Naive thymus-derived CD4-positive, alpha-beta T cell (primary cell): ENCODE measurements at regions of chrX and their contacts with region 1.

Region 1: GRCh38 chrX:19334945-19335626 is 8.6 kb upstream of the PDHA1 start:
- DNase-seq: peak in 4 of 9 donors; percentile 24 to 32 (median 28)
- ATAC-seq: no peak
- H3K4me3 ChIP-seq: no peak overlapping the region
- H3K4me3 Mint-ChIP-seq: peak overlapping the region in 1 of 10 donors; percentile 32
- H3K27ac ChIP-seq: no peak overlapping the region
- H3K27ac Mint-ChIP-seq: peak overlapping the region in 1 of 9 donors; percentile 77
- H3K4me1 ChIP-seq: no peaks in the 10 kb centered on the region
- H3K4me1 Mint-ChIP-seq: peaks cover 0 to 5% (median 2%) of the 10 kb centered on the region in 7 donors
- H3K27me3 ChIP-seq: no peaks in the 10 kb centered on the region
- H3K27me3 Mint-ChIP-seq: peaks cover 0 to 4% (median 0%) of the 10 kb centered on the region in 5 donors

Region 2: GRCh38 chrX:17697191-17697590 is 1637.9 kb before region 1 on chrX:
- CTCF ChIA-PET with region 1: no interaction called
- POLR2A ChIA-PET with region 1: no interaction called
- intact Hi-C with region 1: loop called in 1 of 2 experiments (anchors 2 kb)
- DNase-seq: peak in 5 of 9 donors; percentile 0 to 28 (median 14)
- ATAC-seq: no peak
- H3K4me3 ChIP-seq: no peak overlapping the region
- H3K4me3 Mint-ChIP-seq: no peak overlapping the region
- H3K27ac ChIP-seq: no peak overlapping the region
- H3K27ac Mint-ChIP-seq: no peak overlapping the region
- H3K4me1 ChIP-seq: no peaks in the 10 kb centered on the region
- H3K4me1 Mint-ChIP-seq: no peaks in the 10 kb centered on the region
- H3K27me3 ChIP-seq: no peaks in the 10 kb centered on the region
- H3K27me3 Mint-ChIP-seq: no peaks in the 10 kb centered on the region

Region 3: DNA sequence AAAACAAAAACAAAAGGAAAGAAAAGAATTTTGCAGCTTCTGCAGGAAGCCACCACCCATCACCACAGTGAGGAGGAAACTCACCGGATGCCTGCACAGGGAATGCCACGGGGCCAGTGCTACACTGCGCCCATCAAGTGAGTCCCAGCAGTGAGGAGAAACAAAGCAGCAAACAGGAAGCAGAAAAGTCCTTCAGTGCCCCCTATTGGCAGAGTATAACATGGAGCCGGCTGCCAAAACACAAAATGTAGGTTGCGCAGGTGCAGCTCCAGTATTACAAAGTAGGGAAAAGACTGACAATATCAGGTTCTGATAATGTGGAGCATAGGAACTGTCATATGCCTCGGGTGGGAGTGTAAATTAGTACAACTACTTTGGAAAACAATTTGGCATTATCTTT is 957.3 kb before region 1 on chrX:
- CTCF ChIA-PET with region 1: no interaction called
- POLR2A ChIA-PET with region 1: no interaction called
- intact Hi-C with region 1: no loop called
- DNase-seq: peak in 6 of 9 donors; percentile 21 to 39 (median 24)
- ATAC-seq: peak; percentile 74
- H3K4me3 ChIP-seq: no peak overlapping the region
- H3K4me3 Mint-ChIP-seq: peak overlapping the region in 3 of 10 donors; percentile 20 to 37 (median 26)
- H3K27ac ChIP-seq: no peak overlapping the region
- H3K27ac Mint-ChIP-seq: peak overlapping the region in 5 of 9 donors; percentile 58 to 83 (median 62)
- H3K4me1 ChIP-seq: no peaks in the 10 kb centered on the region
- H3K4me1 Mint-ChIP-seq: peaks cover 0 to 6% (median 5%) of the 10 kb centered on the region in 7 donors
- H3K27me3 ChIP-seq: no peaks in the 10 kb centered on the region
- H3K27me3 Mint-ChIP-seq: no peaks in the 10 kb centered on the region

Region 4: GRCh38 chrX:18390941-18391538 is 944.0 kb before region 1 on chrX:
- CTCF ChIA-PET with region 1: interaction called, 7 read pairs
- POLR2A ChIA-PET with region 1: no interaction called
- intact Hi-C with region 1: loop called (anchors 1 kb)
- DNase-seq: peak; percentile 12 to 69 (median 60)
- ATAC-seq: peak; percentile 60
- H3K4me3 ChIP-seq: no peak overlapping the region
- H3K4me3 Mint-ChIP-seq: no peak overlapping the region
- H3K27ac ChIP-seq: no peak overlapping the region
- H3K27ac Mint-ChIP-seq: peak overlapping the region in 2 of 9 donors; percentile 2 to 19
- H3K4me1 ChIP-seq: no peaks in the 10 kb centered on the region
- H3K4me1 Mint-ChIP-seq: peaks cover 0 to 6% (median 5%) of the 10 kb centered on the region in 7 donors
- H3K27me3 ChIP-seq: no peaks in the 10 kb centered on the region
- H3K27me3 Mint-ChIP-seq: no peaks in the 10 kb centered on the region

Region 5: GRCh38 chrX:18886344-18887161 is 448.5 kb before region 1 on chrX:
- CTCF ChIA-PET with region 1: no interaction called
- POLR2A ChIA-PET with region 1: no interaction called
- intact Hi-C with region 1: loop called in 1 of 2 experiments (anchors 2 kb)
- DNase-seq: peak; percentile 10 to 47 (median 40)
- ATAC-seq: peak; percentile 79
- H3K4me3 ChIP-seq: peak overlapping the region; percentile 56
- H3K4me3 Mint-ChIP-seq: peak overlapping the region; percentile 84 to 97 (median 90)
- H3K27ac ChIP-seq: peak overlapping the region; percentile 57
- H3K27ac Mint-ChIP-seq: peak overlapping the region; percentile 71 to 95 (median 90)
- H3K4me1 ChIP-seq: peaks cover 6 to 23% of the 10 kb centered on the region in 2 donors
- H3K4me1 Mint-ChIP-seq: peaks cover 11 to 47% (median 37%) of the 10 kb centered on the region in 7 donors
- H3K27me3 ChIP-seq: no peaks in the 10 kb centered on the region
- H3K27me3 Mint-ChIP-seq: no peaks in the 10 kb centered on the region

Region 6: DNA sequence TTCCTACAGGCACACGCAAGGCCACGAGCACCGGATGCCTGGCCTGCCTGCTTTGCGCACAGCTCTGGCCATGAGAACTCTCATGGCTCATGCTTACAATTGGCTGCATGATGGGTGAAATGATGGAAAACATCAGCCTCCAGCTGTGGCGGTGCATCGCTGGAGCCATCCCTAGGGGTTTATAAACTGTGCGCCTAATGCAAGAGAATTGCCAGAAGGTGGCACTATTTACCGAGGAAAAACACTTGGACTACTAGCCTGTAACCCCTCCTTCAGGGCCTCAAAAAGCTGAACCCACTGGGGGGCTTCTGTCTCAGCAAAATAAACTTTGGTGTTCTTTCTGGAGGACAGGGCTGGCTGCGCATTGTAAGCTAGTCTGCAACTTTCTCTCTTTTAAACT is 403.1 kb before region 1 on chrX:
- CTCF ChIA-PET with region 1: no interaction called
- POLR2A ChIA-PET with region 1: no interaction called
- intact Hi-C with region 1: loop called in 1 of 2 experiments (anchors 1 kb)
- DNase-seq: peak in 1 of 9 donors; percentile 5
- ATAC-seq: no peak
- H3K4me3 ChIP-seq: no peak overlapping the region
- H3K4me3 Mint-ChIP-seq: no peak overlapping the region
- H3K27ac ChIP-seq: no peak overlapping the region
- H3K27ac Mint-ChIP-seq: no peak overlapping the region
- H3K4me1 ChIP-seq: no peaks in the 10 kb centered on the region
- H3K4me1 Mint-ChIP-seq: no peaks in the 10 kb centered on the region
- H3K27me3 ChIP-seq: no peaks in the 10 kb centered on the region
- H3K27me3 Mint-ChIP-seq: no peaks in the 10 kb centered on the region

Region 7: DNA sequence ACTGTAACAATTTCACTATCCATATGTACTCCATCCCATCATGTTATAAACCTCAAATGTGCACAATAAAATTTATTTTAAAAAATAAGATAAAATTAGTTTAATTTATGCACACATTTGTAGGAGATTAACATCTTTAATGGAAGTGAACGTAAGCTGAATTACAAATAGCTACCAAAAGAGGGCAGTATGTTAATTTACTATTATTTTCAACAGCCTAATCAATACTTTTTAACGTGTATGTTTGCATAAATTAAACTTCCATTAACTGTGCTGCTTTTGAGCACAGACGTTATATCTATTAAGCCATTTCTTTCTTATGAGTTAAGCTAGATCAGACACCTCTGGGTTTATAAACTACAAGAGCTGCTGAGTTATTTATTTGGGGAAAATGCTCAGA is 294.7 kb before region 1 on chrX:
- CTCF ChIA-PET with region 1: no interaction called
- POLR2A ChIA-PET with region 1: no interaction called
- intact Hi-C with region 1: loop called in 1 of 2 experiments (anchors 1 kb)
- DNase-seq: no peak
- ATAC-seq: no peak
- H3K4me3 ChIP-seq: no peak overlapping the region
- H3K4me3 Mint-ChIP-seq: no peak overlapping the region
- H3K27ac ChIP-seq: no peak overlapping the region
- H3K27ac Mint-ChIP-seq: no peak overlapping the region
- H3K4me1 ChIP-seq: no peaks in the 10 kb centered on the region
- H3K4me1 Mint-ChIP-seq: no peaks in the 10 kb centered on the region
- H3K27me3 ChIP-seq: no peaks in the 10 kb centered on the region
- H3K27me3 Mint-ChIP-seq: no peaks in the 10 kb centered on the region

Region 8: GRCh38 chrX:19647731-19648588 is 312.9 kb after region 1 on chrX:
- CTCF ChIA-PET with region 1: no interaction called
- POLR2A ChIA-PET with region 1: no interaction called
- intact Hi-C with region 1: no loop called
- DNase-seq: no peak
- ATAC-seq: no peak
- H3K4me3 ChIP-seq: no peak overlapping the region
- H3K4me3 Mint-ChIP-seq: peak overlapping the region in 1 of 10 donors; percentile 2
- H3K27ac ChIP-seq: no peak overlapping the region
- H3K27ac Mint-ChIP-seq: peak overlapping the region; percentile 25 to 86 (median 63)
- H3K4me1 ChIP-seq: peaks cover 0 to 4% of the 10 kb centered on the region in 2 donors
- H3K4me1 Mint-ChIP-seq: peaks cover 28 to 76% (median 60%) of the 10 kb centered on the region in 7 donors
- H3K27me3 ChIP-seq: no peaks in the 10 kb centered on the region
- H3K27me3 Mint-ChIP-seq: no peaks in the 10 kb centered on the region

Region 9: GRCh38 chrX:20333672-20334071 is 998.6 kb after region 1 on chrX:
- CTCF ChIA-PET with region 1: no interaction called
- POLR2A ChIA-PET with region 1: no interaction called
- intact Hi-C with region 1: no loop called
- DNase-seq: peak in 1 of 9 donors; percentile 20
- ATAC-seq: no peak
- H3K4me3 ChIP-seq: no peak overlapping the region
- H3K4me3 Mint-ChIP-seq: no peak overlapping the region
- H3K27ac ChIP-seq: no peak overlapping the region
- H3K27ac Mint-ChIP-seq: no peak overlapping the region
- H3K4me1 ChIP-seq: no peaks in the 10 kb centered on the region
- H3K4me1 Mint-ChIP-seq: peaks cover 0 to 7% (median 4%) of the 10 kb centered on the region in 7 donors
- H3K27me3 ChIP-seq: no peaks in the 10 kb centered on the region
- H3K27me3 Mint-ChIP-seq: no peaks in the 10 kb centered on the region

Region 10: GRCh38 chrX:20393944-20394343 is 1058.9 kb after region 1 on chrX:
- CTCF ChIA-PET with region 1: no interaction called
- POLR2A ChIA-PET with region 1: no interaction called
- intact Hi-C with region 1: no loop called
- DNase-seq: no peak
- ATAC-seq: no peak
- H3K4me3 ChIP-seq: no peak overlapping the region
- H3K4me3 Mint-ChIP-seq: no peak overlapping the region
- H3K27ac ChIP-seq: no peak overlapping the region
- H3K27ac Mint-ChIP-seq: no peak overlapping the region
- H3K4me1 ChIP-seq: no peaks in the 10 kb centered on the region
- H3K4me1 Mint-ChIP-seq: peaks cover 0 to 3% (median under 1%) of the 10 kb centered on the region in 7 donors
- H3K27me3 ChIP-seq: no peaks in the 10 kb centered on the region
- H3K27me3 Mint-ChIP-seq: peaks cover 0 to 4% (median 0%) of the 10 kb centered on the region in 5 donors